Aorta (tissue), 5 donors: ENCODE measurements at regions of chr9 and their contacts with region 1.

Region 1: GRCh38 chr9:87497604-87498045 is at the start of gene DAPK1:
- DNase-seq: peak; percentile 76 to 87
- ATAC-seq: peak; percentile 77
- H3K4me3 ChIP-seq: peak within 1 kb of the TSS; percentile 18 to 30
- H3K27ac ChIP-seq: no peak within 1 kb of the TSS
- H3K4me1 ChIP-seq: no peaks in the 10 kb centered on the region
- H3K27me3 ChIP-seq: no peaks in the 10 kb centered on the region
- total RNA-seq, gene DAPK1: 26.7 to 41.7 TPM

Region 2: GRCh38 chr9:86948074-86948929 is 549.3 kb before region 1 on chr9:
- intact Hi-C with region 1: no loop called
- DNase-seq: peak; percentile 88 to 93
- ATAC-seq: peak; percentile 80
- H3K4me3 ChIP-seq: peak overlapping the region; percentile 55 to 99
- H3K27ac ChIP-seq: peak overlapping the region in 1 of 2 donors; percentile 61
- H3K4me1 ChIP-seq: no peaks in the 10 kb centered on the region
- H3K27me3 ChIP-seq: no peaks in the 10 kb centered on the region

Region 3: GRCh38 chr9:87395804-87396479 is 101.7 kb before region 1 on chr9:
- intact Hi-C with region 1: no loop called
- DNase-seq: no peak
- ATAC-seq: no peak
- H3K4me3 ChIP-seq: no peak overlapping the region
- H3K27ac ChIP-seq: no peak overlapping the region
- H3K4me1 ChIP-seq: no peaks in the 10 kb centered on the region
- H3K27me3 ChIP-seq: no peaks in the 10 kb centered on the region

Region 4: DNA sequence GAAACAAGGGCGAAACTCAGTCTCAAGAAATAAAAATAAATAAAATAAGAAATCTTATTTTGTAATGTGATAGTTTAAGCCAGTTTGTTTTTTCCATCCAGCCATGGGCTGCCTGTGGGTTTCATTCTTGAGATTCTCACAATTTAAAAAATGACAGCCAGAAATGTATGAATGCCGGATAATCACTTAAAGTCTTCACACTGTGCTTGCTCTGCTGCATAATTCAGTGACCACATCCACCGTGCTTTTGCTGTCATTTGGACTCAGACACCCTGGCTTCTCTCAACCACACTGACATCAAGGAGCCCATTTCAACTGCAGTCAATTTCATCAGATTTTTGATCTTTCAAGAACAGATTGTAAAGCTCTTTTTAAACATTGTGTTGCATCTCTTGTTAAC is 60.9 kb before region 1 on chr9:
- intact Hi-C with region 1: loop called in 1 of 2 experiments (anchors 10 kb)
- DNase-seq: no peak
- ATAC-seq: no peak
- H3K4me3 ChIP-seq: no peak overlapping the region
- H3K27ac ChIP-seq: no peak overlapping the region
- H3K4me1 ChIP-seq: no peaks in the 10 kb centered on the region
- H3K27me3 ChIP-seq: no peaks in the 10 kb centered on the region